Calu3 (cell line): ENCODE measurements at regions of chr6 and their contacts with region 1.

Region 1: DNA sequence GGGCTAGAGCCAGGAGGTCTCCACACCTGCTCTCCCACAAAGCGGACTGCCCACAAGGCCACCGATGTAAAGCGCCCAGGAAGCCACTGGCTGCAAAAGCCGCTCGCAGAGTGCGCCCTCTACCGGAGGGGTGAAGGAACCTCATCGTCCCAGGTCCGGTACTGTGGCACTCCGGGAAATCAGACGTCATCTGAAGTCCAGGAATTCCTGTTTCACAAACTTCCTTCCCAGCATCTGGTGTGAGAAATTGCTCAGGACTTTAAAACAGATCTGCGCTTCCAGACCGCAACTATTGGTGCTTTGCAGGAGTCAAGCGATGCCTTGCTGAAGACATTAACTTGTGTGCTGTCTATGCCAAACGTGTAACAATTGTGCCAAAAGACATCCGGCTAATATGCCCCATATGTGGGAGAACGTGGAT is 115.1 kb upstream of the ARID1B start:
- DNase-seq: peak; percentile 89
- H3K4me3 Mint-ChIP-seq: peak overlapping the region; percentile 62
- H3K27ac Mint-ChIP-seq: no peak overlapping the region
- H3K4me1 Mint-ChIP-seq: peaks cover 19% of the 10 kb centered on the region
- H3K27me3 Mint-ChIP-seq: peaks cover 27% of the 10 kb centered on the region
- CTCF ChIP-seq: peak; percentile 65

Region 2: GRCh38 chr6:156557251-156557910 is 104.7 kb before region 1 on chr6:
- CTCF ChIA-PET with region 1: no interaction called
- intact Hi-C with region 1: loop called (anchors 10 kb)
- DNase-seq: no peak
- H3K4me3 Mint-ChIP-seq: no peak overlapping the region
- H3K27ac Mint-ChIP-seq: no peak overlapping the region
- H3K4me1 Mint-ChIP-seq: no peaks in the 10 kb centered on the region
- H3K27me3 Mint-ChIP-seq: no peaks in the 10 kb centered on the region
- CTCF ChIP-seq: no peak